ENCODE measurements at regions of chr9 and their contacts with region 1.

Region 1: GRCh38 chr9:99184475-99185347 is 37.0 kb downstream of the ALG2 start:
- DNase-seq: peak; percentile 50 to 75 (median 72)
- ATAC-seq: peak; percentile 91
- H3K4me3 ChIP-seq: no peak overlapping the region
- H3K4me3 Mint-ChIP-seq: peak overlapping the region in 7 of 10 donors; percentile 43 to 73 (median 50)
- H3K27ac ChIP-seq: no peak overlapping the region
- H3K27ac Mint-ChIP-seq: peak overlapping the region in 4 of 9 donors; percentile 40 to 69 (median 52)
- H3K4me1 ChIP-seq: peaks cover 0 to 3% of the 10 kb centered on the region in 2 donors
- H3K4me1 Mint-ChIP-seq: peaks cover 0 to 43% (median 19%) of the 10 kb centered on the region in 7 donors
- H3K27me3 ChIP-seq: peaks cover 0 to 3% of the 10 kb centered on the region in 2 donors
- H3K27me3 Mint-ChIP-seq: peaks cover 0 to 18% (median 7%) of the 10 kb centered on the region in 5 donors

Region 2: GRCh38 chr9:98848450-98849149 is 336.1 kb before region 1 on chr9:
- CTCF ChIA-PET with region 1: interaction called, 3 read pairs
- POLR2A ChIA-PET with region 1: no interaction called
- intact Hi-C with region 1: loop called in 1 of 2 experiments (anchors 1 kb)
- DNase-seq: peak; percentile 26 to 74 (median 55)
- ATAC-seq: peak; percentile 95
- H3K4me3 ChIP-seq: no peak overlapping the region
- H3K4me3 Mint-ChIP-seq: no peak overlapping the region
- H3K27ac ChIP-seq: no peak overlapping the region
- H3K27ac Mint-ChIP-seq: peak overlapping the region in 4 of 9 donors; percentile 3 to 64 (median 38)
- H3K4me1 ChIP-seq: no peaks in the 10 kb centered on the region
- H3K4me1 Mint-ChIP-seq: peaks cover 0 to 15% (median 4%) of the 10 kb centered on the region in 7 donors
- H3K27me3 ChIP-seq: no peaks in the 10 kb centered on the region
- H3K27me3 Mint-ChIP-seq: no peaks in the 10 kb centered on the region

Region 3: GRCh38 chr9:99162759-99163364 is 21.8 kb before region 1 on chr9:
- CTCF ChIA-PET with region 1: interaction called, 4 read pairs
- POLR2A ChIA-PET with region 1: no interaction called
- intact Hi-C with region 1: loop called (anchors 1 to 2 kb)
- DNase-seq: peak in 7 of 9 donors; percentile 22 to 59 (median 47)
- ATAC-seq: peak; percentile 61
- H3K4me3 ChIP-seq: no peak overlapping the region
- H3K4me3 Mint-ChIP-seq: peak overlapping the region in 1 of 10 donors; percentile 0
- H3K27ac ChIP-seq: no peak overlapping the region
- H3K27ac Mint-ChIP-seq: no peak overlapping the region
- H3K4me1 ChIP-seq: peaks cover 0 to 8% of the 10 kb centered on the region in 2 donors
- H3K4me1 Mint-ChIP-seq: peaks cover 9 to 32% (median 17%) of the 10 kb centered on the region in 7 donors
- H3K27me3 ChIP-seq: no peaks in the 10 kb centered on the region
- H3K27me3 Mint-ChIP-seq: peaks cover 7 to 32% (median 10%) of the 10 kb centered on the region in 5 donors

Region 4: GRCh38 chr9:99197987-99198386 is 13.3 kb after region 1 on chr9:
- CTCF ChIA-PET with region 1: interaction called, 12 read pairs
- POLR2A ChIA-PET with region 1: no interaction called
- intact Hi-C with region 1: no loop called
- DNase-seq: no peak
- ATAC-seq: no peak
- H3K4me3 ChIP-seq: no peak overlapping the region
- H3K4me3 Mint-ChIP-seq: no peak overlapping the region
- H3K27ac ChIP-seq: no peak overlapping the region
- H3K27ac Mint-ChIP-seq: no peak overlapping the region
- H3K4me1 ChIP-seq: no peaks in the 10 kb centered on the region
- H3K4me1 Mint-ChIP-seq: peaks cover 0 to 32% (median 0%) of the 10 kb centered on the region in 7 donors
- H3K27me3 ChIP-seq: no peaks in the 10 kb centered on the region
- H3K27me3 Mint-ChIP-seq: peaks cover 0 to 41% (median 6%) of the 10 kb centered on the region in 5 donors

Region 5: DNA sequence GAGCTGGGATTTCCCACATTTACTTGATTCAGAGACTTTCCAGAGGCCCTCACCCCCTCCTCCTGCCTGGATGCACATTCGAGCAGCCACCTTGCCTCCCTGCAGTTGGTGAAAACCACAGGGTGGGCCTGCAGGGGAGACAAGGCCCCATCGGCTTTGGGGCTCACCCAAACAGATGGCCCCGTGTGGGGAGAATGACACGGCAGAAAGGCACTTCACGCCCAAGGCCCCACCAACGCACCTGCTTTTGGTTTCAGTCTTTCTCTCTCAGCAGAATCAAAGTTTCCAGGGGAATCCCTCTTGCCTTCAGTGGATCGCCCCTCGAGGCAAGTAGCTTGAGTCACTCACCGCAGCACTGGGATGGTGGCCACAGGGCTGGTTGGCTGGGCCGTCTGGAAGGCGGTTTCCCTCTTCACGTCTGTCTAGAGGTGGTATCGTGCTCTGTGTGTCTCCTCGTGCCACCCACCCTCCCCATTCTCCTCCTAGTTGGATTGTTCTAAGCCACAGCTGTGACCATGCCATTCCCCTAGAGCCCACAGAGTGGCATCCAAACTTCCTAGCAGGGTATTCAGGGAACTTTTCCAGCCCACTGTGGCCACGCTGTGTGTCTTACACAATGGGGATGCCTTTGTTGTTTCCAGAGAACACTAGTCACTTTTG is 69.2 kb after region 1 on chr9:
- CTCF ChIA-PET with region 1: no interaction called
- POLR2A ChIA-PET with region 1: no interaction called
- intact Hi-C with region 1: loop called in 1 of 2 experiments (anchors 1 kb)
- DNase-seq: peak in 2 of 9 donors; percentile 8 to 89
- ATAC-seq: peak; percentile 73
- H3K4me3 ChIP-seq: no peak overlapping the region
- H3K4me3 Mint-ChIP-seq: peak overlapping the region in 6 of 10 donors; percentile 38 to 81 (median 50)
- H3K27ac ChIP-seq: no peak overlapping the region
- H3K27ac Mint-ChIP-seq: peak overlapping the region in 2 of 9 donors; percentile 56 to 92
- H3K4me1 ChIP-seq: no peaks in the 10 kb centered on the region
- H3K4me1 Mint-ChIP-seq: peaks cover 0 to 38% (median 7%) of the 10 kb centered on the region in 7 donors
- H3K27me3 ChIP-seq: no peaks in the 10 kb centered on the region
- H3K27me3 Mint-ChIP-seq: peaks cover 0 to 8% (median 0%) of the 10 kb centered on the region in 5 donors

Region 6: DNA sequence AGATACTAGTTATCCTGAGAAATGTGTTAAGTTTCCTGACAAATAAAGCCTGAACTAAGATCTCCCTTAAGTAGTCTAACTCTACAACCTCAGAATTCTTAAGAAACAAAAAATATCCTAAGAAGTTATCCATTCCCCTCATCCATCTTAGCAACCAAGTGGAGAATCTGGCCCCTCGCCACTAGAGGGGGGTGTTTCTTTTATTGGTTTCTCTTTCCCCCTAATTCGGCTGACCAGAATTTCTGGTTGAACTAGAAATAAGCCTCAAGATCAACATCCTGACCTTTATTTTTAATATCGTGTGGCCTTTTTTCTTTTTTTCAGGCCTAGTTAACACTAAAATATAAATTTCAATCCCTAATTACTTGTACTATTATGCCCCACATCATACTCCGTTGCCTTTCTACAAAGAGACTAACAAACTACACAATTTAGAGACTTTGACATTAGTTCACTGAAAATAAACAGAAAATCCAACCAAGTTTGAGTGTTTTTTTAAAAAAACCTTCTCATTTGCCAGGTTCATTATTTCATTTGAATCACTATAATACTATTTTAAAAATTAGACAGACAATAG is 622.7 kb after region 1 on chr9:
- CTCF ChIA-PET with region 1: no interaction called
- POLR2A ChIA-PET with region 1: no interaction called
- intact Hi-C with region 1: loop called (anchors 1 kb)
- DNase-seq: peak in 8 of 9 donors; percentile 31 to 76 (median 68)
- ATAC-seq: peak; percentile 89
- H3K4me3 ChIP-seq: no peak overlapping the region
- H3K4me3 Mint-ChIP-seq: no peak overlapping the region
- H3K27ac ChIP-seq: no peak overlapping the region
- H3K27ac Mint-ChIP-seq: peak overlapping the region in 4 of 9 donors; percentile 1 to 63 (median 12)
- H3K4me1 ChIP-seq: peaks cover 0 to 5% of the 10 kb centered on the region in 2 donors
- H3K4me1 Mint-ChIP-seq: peaks cover 0 to 23% (median 4%) of the 10 kb centered on the region in 7 donors
- H3K27me3 ChIP-seq: no peaks in the 10 kb centered on the region
- H3K27me3 Mint-ChIP-seq: peaks cover 0 to 12% (median 0%) of the 10 kb centered on the region in 5 donors

Region 7: GRCh38 chr9:100011062-100011681 is 826.5 kb after region 1 on chr9:
- CTCF ChIA-PET with region 1: no interaction called
- POLR2A ChIA-PET with region 1: no interaction called
- intact Hi-C with region 1: loop called (anchors 1 kb)
- DNase-seq: peak in 7 of 9 donors; percentile 24 to 63 (median 42)
- ATAC-seq: peak; percentile 67
- H3K4me3 ChIP-seq: no peak overlapping the region
- H3K4me3 Mint-ChIP-seq: no peak overlapping the region
- H3K27ac ChIP-seq: no peak overlapping the region
- H3K27ac Mint-ChIP-seq: no peak overlapping the region
- H3K4me1 ChIP-seq: no peaks in the 10 kb centered on the region
- H3K4me1 Mint-ChIP-seq: peaks cover 0 to 5% (median 0%) of the 10 kb centered on the region in 7 donors
- H3K27me3 ChIP-seq: no peaks in the 10 kb centered on the region
- H3K27me3 Mint-ChIP-seq: no peaks in the 10 kb centered on the region

Measured in naive thymus-derived CD4-positive, alpha-beta T cell (primary cell).